ENCODE measurements at regions of chr2 and their contacts with region 1.

Region 1: DNA sequence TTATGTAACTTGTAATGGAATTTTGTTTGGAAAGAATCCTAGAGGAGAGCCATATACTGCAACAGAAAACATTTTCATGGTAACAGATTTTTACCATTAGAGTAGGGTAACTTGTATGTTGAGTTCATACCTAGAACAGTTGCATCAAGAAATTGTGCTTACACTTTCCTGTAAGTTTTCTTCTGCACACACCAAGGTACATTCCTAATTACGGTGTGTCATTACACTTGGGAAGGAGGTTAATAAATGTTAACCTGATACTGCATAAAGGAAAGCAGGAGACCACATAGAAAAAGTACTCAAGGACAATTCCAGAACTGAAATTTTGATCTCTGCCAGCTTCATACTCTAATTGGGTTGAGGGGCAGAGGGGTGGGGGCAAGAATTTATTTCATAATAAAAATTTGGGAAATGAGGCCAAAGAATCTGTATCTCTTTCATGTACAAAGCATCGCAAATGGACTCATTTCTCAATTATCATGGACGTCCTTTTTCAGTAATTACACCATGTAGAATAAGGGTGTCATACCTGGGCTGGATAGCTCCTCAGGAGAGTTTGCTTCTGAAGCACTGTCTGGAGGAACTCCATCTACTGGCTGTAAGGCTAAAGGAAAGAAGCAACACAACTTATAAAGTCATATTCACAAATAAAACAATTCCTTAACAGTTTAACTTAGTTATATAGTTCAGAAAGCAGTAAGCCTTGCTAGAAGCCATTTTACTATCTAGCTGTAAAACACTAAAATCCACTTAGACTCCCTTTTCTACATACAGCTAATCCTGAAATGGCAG is 82.8 kb upstream of the GRB14 start:
- DNase-seq: no peak
- ATAC-seq: no peak
- H3K4me3 Mint-ChIP-seq: no peak overlapping the region
- H3K27ac Mint-ChIP-seq: no peak overlapping the region
- H3K4me1 Mint-ChIP-seq: no peaks in the 10 kb centered on the region
- H3K27me3 Mint-ChIP-seq: no peaks in the 10 kb centered on the region
- CTCF ChIP-seq: no peak

Region 2: GRCh38 chr2:164688906-164689419 is 15.1 kb before region 1 on chr2:
- CTCF ChIA-PET with region 1: no interaction called
- POLR2A ChIA-PET with region 1: no interaction called
- intact Hi-C with region 1: loop called (anchors 2 kb)
- DNase-seq: no peak
- ATAC-seq: no peak
- H3K4me3 Mint-ChIP-seq: no peak overlapping the region
- H3K27ac Mint-ChIP-seq: no peak overlapping the region
- H3K4me1 Mint-ChIP-seq: no peaks in the 10 kb centered on the region
- H3K27me3 Mint-ChIP-seq: no peaks in the 10 kb centered on the region
- CTCF ChIP-seq: no peak

Region 3: GRCh38 chr2:164737612-164738081 is 33.5 kb after region 1 on chr2:
- CTCF ChIA-PET with region 1: no interaction called
- POLR2A ChIA-PET with region 1: no interaction called
- intact Hi-C with region 1: no loop called
- DNase-seq: peak; percentile 29
- ATAC-seq: peak; percentile 62
- H3K4me3 Mint-ChIP-seq: peak overlapping the region; percentile 21
- H3K27ac Mint-ChIP-seq: peak overlapping the region; percentile 74
- H3K4me1 Mint-ChIP-seq: peaks cover 72% of the 10 kb centered on the region
- H3K27me3 Mint-ChIP-seq: no peaks in the 10 kb centered on the region
- CTCF ChIP-seq: no peak

Region 4: GRCh38 chr2:164840930-164841718 is 137.0 kb after region 1 on chr2:
- CTCF ChIA-PET with region 1: no interaction called
- POLR2A ChIA-PET with region 1: no interaction called
- intact Hi-C with region 1: no loop called
- DNase-seq: peak; percentile 74
- ATAC-seq: peak; percentile 81
- H3K4me3 Mint-ChIP-seq: peak overlapping the region; percentile 97
- H3K27ac Mint-ChIP-seq: peak overlapping the region; percentile 91
- H3K4me1 Mint-ChIP-seq: peaks cover 50% of the 10 kb centered on the region
- H3K27me3 Mint-ChIP-seq: no peaks in the 10 kb centered on the region
- CTCF ChIP-seq: no peak

Region 5: DNA sequence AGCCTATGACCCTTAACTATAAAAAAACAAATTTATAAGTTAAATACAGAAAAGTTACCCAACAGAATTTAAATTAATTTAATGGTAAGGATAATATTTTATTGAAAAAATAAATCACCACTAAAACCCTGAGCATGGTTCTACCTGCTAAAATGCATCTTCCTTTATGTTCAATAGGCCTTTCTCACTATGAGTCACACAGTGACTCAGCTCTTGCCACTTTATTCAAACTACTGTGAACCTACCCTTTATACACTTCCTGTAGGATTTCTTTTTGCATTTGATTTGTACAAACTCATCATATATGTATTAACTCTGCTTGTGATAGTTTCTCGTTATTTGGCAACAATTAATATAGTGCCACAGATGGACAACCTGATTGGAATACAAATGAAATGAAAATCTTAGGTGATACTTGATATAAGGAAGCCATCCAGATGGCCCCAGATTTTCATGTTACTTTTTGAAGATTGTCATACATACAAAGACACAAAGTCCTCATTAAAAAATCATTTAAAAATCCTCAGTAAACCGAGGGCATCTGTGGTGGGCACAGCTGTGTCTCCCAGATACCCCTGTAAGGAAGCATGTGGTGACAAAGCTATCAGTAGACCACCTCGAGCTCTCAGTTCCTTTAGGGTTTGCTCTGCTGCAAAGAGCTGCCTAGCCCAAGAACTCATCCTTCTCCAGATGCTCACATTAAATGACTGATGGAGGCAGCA is 192.7 kb after region 1 on chr2:
- CTCF ChIA-PET with region 1: no interaction called
- POLR2A ChIA-PET with region 1: no interaction called
- intact Hi-C with region 1: no loop called
- DNase-seq: no peak
- ATAC-seq: peak; percentile 97
- H3K4me3 Mint-ChIP-seq: no peak overlapping the region
- H3K27ac Mint-ChIP-seq: peak overlapping the region; percentile 68
- H3K4me1 Mint-ChIP-seq: peaks cover 19% of the 10 kb centered on the region
- H3K27me3 Mint-ChIP-seq: no peaks in the 10 kb centered on the region
- CTCF ChIP-seq: no peak

Measured in activated B cell treated with CpG ODN at 0.5 μM for 24 hours (primary cell).